Activated CD4-positive, alpha-beta memory T cell treated with anti-CD3 and anti-CD28 coated beads for 36 hours (primary cell): ENCODE measurements at regions of chr4 and their contacts with region 1.

Region 1: DNA sequence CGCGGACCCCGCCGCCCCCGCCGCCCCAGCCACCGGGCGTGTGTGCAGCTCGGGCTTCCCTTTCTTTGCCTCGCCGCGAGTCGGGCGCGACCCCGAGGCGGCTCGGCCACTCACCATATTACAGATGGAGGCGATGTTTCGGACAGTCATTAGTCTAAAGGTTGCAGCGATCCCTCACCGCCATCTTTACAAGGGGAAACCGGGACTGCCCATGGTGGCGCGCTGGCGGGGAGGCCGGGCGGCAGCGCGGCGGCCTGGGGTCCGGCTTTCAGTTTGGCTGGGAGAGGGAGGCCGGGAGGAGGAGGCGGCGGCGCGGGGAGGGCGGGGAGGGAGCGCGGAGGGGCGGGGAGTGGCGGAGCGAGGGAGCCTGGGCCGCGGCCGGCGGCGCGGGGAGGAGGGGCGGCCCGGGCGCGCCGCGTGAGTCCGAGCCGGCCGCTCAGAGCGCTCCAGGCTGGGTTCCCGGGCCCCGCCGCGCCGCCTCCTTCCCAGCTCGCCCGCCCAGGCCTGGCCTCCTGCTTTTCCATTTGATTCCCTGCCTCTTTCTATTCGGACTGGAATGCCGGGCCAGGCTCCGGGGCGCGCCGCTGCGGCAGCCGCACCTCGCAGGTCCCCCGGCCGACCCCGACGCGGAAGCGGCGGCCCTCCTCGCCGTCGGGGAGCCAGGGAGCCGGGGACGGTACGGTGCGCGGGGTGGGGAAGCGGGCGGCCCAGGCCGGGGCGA is at the start of gene USP46:
- DNase-seq: peak; percentile 68
- H3K4me3 Mint-ChIP-seq: peak within 1 kb of the TSS; percentile 84
- H3K27ac Mint-ChIP-seq: peak within 1 kb of the TSS; percentile 79
- H3K4me1 Mint-ChIP-seq: peaks cover 40% of the 10 kb centered on the region
- H3K27me3 Mint-ChIP-seq: peaks cover 2% of the 10 kb centered on the region
- total RNA-seq, gene USP46: 6.2 to 7.0 TPM

Region 2: GRCh38 chr4:52260514-52261210 is 398.5 kb before region 1 on chr4:
- CTCF ChIA-PET with region 1: no interaction called
- POLR2A ChIA-PET with region 1: no interaction called
- intact Hi-C with region 1: no loop called
- DNase-seq: no peak
- H3K4me3 Mint-ChIP-seq: no peak overlapping the region
- H3K27ac Mint-ChIP-seq: no peak overlapping the region
- H3K4me1 Mint-ChIP-seq: no peaks in the 10 kb centered on the region
- H3K27me3 Mint-ChIP-seq: no peaks in the 10 kb centered on the region

Region 3: DNA sequence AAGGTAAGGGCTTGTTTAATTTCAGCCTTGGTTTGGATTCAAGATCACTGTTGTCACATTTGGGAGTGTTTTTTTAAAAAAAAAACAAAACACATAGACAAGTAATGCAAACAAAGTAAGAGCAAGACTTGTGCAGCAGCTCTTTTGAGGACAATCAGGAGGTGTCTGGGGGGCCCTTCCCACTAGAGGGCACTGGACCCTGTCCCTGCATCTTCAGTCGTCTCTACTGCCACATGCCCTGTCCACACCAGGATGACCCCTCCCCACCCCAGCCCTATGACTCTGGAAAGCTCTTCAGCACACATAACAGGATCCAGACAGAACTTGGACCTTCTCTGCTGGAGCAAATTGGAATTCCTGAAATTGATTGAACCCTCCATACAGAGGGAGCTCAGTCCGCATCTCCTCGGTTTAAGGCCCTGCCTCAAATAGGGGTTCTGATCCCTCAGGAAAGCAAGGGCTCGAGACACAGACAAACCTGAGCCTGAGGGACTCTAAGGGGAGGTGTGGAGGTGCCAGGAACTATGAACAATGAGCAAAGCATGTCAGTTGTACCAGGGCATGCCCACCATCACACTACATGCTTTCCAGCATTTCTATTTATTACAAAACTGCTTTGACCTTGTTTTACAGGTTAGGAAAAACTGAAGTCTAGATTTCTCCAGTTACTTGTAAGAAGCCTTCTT is 70.9 kb before region 1 on chr4:
- CTCF ChIA-PET with region 1: interaction called, 3 read pairs
- POLR2A ChIA-PET with region 1: interaction called, 4 read pairs
- intact Hi-C with region 1: loop called (anchors 1 kb)
- DNase-seq: peak; percentile 51
- H3K4me3 Mint-ChIP-seq: no peak overlapping the region
- H3K27ac Mint-ChIP-seq: peak overlapping the region; percentile 44
- H3K4me1 Mint-ChIP-seq: peaks cover 31% of the 10 kb centered on the region
- H3K27me3 Mint-ChIP-seq: no peaks in the 10 kb centered on the region

Region 4: GRCh38 chr4:52627876-52628275 is 31.3 kb before region 1 on chr4:
- CTCF ChIA-PET with region 1: no interaction called
- POLR2A ChIA-PET with region 1: no interaction called
- intact Hi-C with region 1: no loop called
- DNase-seq: no peak
- H3K4me3 Mint-ChIP-seq: no peak overlapping the region
- H3K27ac Mint-ChIP-seq: no peak overlapping the region
- H3K4me1 Mint-ChIP-seq: peaks cover under 1% of the 10 kb centered on the region
- H3K27me3 Mint-ChIP-seq: no peaks in the 10 kb centered on the region

Region 5: DNA sequence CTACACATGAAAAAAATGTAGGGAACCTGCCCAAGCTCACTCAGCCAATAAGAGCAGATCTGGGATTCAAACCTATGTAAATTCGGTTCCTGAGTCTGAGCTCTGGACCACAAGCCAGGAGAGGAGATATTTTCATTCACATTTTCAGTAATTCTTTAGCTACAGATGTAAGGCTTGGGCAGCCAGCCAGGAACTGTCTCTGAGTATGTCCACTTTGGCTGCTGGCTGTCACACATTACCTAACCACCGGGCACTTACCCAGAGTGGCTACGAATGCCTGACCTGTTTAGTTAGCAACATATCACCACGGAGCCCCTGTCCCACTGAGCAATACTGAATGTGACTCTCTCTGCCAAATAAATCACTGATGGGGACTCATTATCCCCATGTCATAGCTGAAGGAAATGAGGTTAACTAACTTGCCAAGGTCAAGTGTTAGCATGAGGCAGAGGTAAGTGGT is 15.3 kb before region 1 on chr4:
- CTCF ChIA-PET with region 1: interaction called, 3 read pairs
- POLR2A ChIA-PET with region 1: interaction called, 5 read pairs
- intact Hi-C with region 1: loop called (anchors 2 kb)
- DNase-seq: no peak
- H3K4me3 Mint-ChIP-seq: no peak overlapping the region
- H3K27ac Mint-ChIP-seq: no peak overlapping the region
- H3K4me1 Mint-ChIP-seq: peaks cover 57% of the 10 kb centered on the region
- H3K27me3 Mint-ChIP-seq: no peaks in the 10 kb centered on the region